ENCODE measurements at regions of chr1 and their contacts with region 1.

Region 1: GRCh38 chr1:32335790-32336590 is at the start of gene MARCKSL1:
- DNase-seq: peak; percentile 92 to 96 (median 95)
- H3K4me3 ChIP-seq: peak within 1 kb of the TSS; percentile 67
- H3K27ac ChIP-seq: peak within 1 kb of the TSS; percentile 85 to 95
- H3K4me1 ChIP-seq: peaks cover 3% of the 10 kb centered on the region
- H3K27me3 ChIP-seq: no peaks in the 10 kb centered on the region
- CTCF ChIP-seq: no peak
- EP300 ChIP-seq: no peak
- POLR2A ChIP-seq: peak; percentile 86
- total RNA-seq, gene MARCKSL1: 105 to 667 (median 335) TPM

Region 2: DNA sequence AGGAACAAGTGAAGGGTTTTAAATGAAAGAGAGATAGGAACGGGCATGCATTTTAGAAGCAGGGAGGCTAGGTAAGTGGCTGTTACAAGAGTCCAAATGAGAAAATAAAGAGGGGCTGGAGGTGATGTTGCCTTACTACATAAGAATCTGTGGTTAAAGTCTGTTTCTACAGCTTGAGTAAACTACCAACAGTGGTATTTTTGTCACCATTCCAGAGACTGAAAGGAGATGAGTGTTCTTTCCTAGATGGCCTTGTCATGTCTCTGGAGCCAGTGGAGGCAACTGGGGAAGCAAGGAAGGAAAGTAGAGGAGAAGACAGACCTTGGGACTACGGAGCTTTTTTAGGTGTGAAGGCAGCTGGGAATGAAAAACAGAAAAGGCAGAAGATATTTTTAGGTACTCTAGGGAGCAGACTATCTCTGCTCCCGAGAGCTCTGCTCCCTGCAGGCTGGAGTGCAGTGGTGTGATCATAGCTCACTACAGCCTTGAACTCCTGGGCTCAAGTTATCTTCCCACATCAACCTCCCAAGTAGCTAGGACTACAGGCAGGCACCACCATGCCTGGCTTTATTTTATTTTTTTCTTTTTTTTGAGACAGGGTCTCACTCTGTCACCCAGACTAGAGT is 31.9 kb before region 1 on chr1:
- intact Hi-C with region 1: no loop called
- DNase-seq: no peak
- H3K4me3 ChIP-seq: no peak overlapping the region
- H3K27ac ChIP-seq: no peak overlapping the region
- H3K4me1 ChIP-seq: peaks cover 5% of the 10 kb centered on the region
- H3K27me3 ChIP-seq: no peaks in the 10 kb centered on the region
- CTCF ChIP-seq: no peak
- EP300 ChIP-seq: no peak
- POLR2A ChIP-seq: no peak

Region 3: DNA sequence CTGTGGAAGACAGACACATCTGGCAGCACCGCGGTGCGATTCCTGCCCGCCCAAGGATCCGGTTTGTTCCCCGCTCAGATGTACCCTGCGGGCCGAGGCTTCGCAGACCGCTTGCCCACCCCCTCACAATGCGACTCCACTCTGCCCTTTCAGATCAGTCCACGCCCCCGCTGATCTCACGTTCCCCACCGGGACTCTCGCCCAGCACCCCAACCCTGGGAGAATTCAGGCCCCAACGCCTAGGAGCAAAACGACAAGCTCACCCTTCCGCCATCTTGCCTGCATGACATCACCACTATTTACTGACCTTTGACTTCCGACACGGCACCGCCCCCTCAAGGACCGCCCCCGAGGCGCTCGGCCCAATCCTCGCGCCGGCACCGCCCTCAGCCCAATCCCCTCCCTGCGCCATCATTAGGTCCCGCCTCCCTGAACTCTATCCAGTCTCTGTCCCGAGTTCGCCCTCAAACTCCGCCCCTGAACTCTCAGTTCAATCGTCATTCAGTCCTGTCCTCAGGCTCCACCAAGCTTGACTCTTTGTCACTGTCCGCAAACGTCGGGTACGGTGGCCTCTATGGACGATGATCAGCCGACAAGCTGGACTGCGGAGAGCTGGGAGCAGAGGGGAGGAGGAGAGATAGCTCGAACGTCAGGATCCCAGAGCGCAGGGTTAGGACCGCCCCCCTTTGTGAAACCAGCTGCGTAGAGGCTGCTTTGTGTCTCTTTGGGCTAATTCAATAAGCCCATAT is 58.3 kb after region 1 on chr1 and contains the start of gene BSDC1:
- intact Hi-C with region 1: loop called in 1 of 4 experiments (anchors 2 kb)
- DNase-seq: peak; percentile 98 to 99 (median 99)
- H3K4me3 ChIP-seq: peak within 1 kb of the TSS; percentile 67
- H3K27ac ChIP-seq: peak within 1 kb of the TSS; percentile 75 to 78
- H3K4me1 ChIP-seq: peaks cover 17% of the 10 kb centered on the region
- H3K27me3 ChIP-seq: no peaks in the 10 kb centered on the region
- CTCF ChIP-seq: peak in 1 of 3 donors; percentile 14
- EP300 ChIP-seq: no peak
- POLR2A ChIP-seq: peak; percentile 99
- total RNA-seq, gene BSDC1: 54.9 to 107 (median 73.0) TPM